ENCODE measurements at regions of chr14 and their contacts with region 1.

Region 1: GRCh38 chr14:100900837-100901390 is 2.6 kb downstream of the RTL1 start:
- DNase-seq: no peak
- ATAC-seq: peak; percentile 68
- H3K4me3 ChIP-seq: no peak overlapping the region
- H3K27ac ChIP-seq: no peak overlapping the region
- H3K4me1 ChIP-seq: no peaks in the 10 kb centered on the region
- H3K27me3 ChIP-seq: no peaks in the 10 kb centered on the region
- CTCF ChIP-seq: peak; percentile 76

Region 2: GRCh38 chr14:100654814-100655740 is 245.8 kb before region 1 on chr14:
- CTCF ChIA-PET with region 1: no interaction called
- POLR2A ChIA-PET with region 1: no interaction called
- in situ Hi-C with region 1: no loop called
- intact Hi-C with region 1: no loop called
- DNase-seq: no peak
- ATAC-seq: peak; percentile 79
- H3K4me3 ChIP-seq: peak overlapping the region; percentile 15 to 23
- H3K27ac ChIP-seq: peak overlapping the region; percentile 75
- H3K4me1 ChIP-seq: peaks cover 34% of the 10 kb centered on the region
- H3K27me3 ChIP-seq: no peaks in the 10 kb centered on the region
- CTCF ChIP-seq: peak; percentile 90

Region 3: GRCh38 chr14:100850841-100851585 is 49.9 kb before region 1 on chr14:
- CTCF ChIA-PET with region 1: no interaction called
- POLR2A ChIA-PET with region 1: no interaction called
- in situ Hi-C with region 1: no loop called
- intact Hi-C with region 1: loop called (anchors 2 kb)
- DNase-seq: no peak
- ATAC-seq: peak; percentile 94
- H3K4me3 ChIP-seq: no peak overlapping the region
- H3K27ac ChIP-seq: no peak overlapping the region
- H3K4me1 ChIP-seq: no peaks in the 10 kb centered on the region
- H3K27me3 ChIP-seq: no peaks in the 10 kb centered on the region
- CTCF ChIP-seq: peak; percentile 84

Measured in Panc1 (cell line).